Dendritic cell treated with granulocyte-macrophage colony-stimulating factor and Interleukin-4, amounts not matched to agents 40 ng/mL and 50 ng/mL, for 4 days (primary cell): ENCODE measurements at regions of chr7 and their contacts with region 1.

Region 1: DNA sequence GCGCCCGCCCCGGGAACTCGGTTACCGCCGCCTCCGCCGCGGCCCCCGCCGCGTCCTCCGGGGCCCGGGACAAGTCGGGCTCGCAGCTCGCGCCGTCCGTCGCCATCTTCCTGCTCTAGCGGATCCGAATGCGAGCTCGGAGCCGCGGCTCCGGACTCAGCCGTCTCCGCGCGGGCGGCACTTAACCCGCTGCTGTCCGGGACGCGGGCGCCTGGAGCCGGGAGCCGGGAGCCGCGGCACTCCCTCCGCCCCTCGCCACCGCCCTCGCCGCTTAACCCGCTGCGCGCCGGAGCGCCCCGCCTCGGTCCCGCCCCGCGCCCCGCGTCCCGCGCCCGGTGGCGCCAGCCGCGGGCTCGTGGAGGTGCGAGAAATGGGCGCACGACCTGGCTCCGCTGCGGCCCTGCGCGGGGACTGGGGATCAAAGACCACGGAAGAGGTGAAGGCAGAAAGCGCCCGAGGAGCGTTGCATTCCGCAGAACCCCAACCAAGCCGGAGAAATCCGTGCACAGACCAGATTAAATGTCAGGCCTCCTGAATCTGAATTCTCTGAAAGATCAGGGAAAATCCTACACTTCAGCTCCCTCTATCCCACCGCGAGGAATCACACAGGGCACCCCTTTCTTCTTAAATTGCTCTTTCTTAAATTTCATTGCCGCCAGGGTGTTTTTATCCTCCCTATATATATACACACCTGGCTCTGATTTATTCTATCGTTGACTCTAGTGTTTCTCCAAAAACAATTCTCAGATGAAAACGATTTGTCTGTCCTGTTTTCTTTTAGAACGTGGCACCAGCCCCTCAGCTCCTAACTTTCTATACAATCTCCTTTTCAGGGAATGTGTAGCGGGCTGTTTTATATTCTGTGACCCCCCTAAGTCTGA is at the start of gene CTTNBP2:
- H3K4me3 Mint-ChIP-seq: peak within 1 kb of the TSS; percentile 83
- H3K27ac Mint-ChIP-seq: peak within 1 kb of the TSS; percentile 77
- H3K4me1 Mint-ChIP-seq: peaks cover 43% of the 10 kb centered on the region
- H3K27me3 Mint-ChIP-seq: peaks cover 60% of the 10 kb centered on the region

Region 2: DNA sequence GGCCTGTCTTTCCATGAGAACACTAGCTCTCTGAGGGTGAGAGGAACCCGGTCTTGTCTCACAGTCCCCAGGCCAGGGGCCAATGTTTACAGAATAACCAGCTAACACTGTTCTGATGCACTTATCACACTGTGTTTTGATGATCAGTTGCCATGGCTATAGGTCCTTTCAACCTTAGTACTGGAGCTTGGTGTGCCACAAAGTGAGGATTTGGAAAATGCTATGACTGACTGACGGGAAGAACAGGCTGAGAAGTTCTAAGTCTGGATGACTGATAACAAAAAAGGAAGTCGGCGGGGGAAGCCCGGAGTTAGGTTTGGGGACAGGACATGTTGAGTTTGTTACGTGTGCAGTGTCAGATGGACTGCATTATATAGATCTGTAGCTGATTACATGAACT is 142.1 kb before region 1 on chr7:
- intact Hi-C with region 1: loop called (anchors 5 kb)
- H3K4me3 Mint-ChIP-seq: no peak overlapping the region
- H3K27ac Mint-ChIP-seq: peak overlapping the region; percentile 83
- H3K4me1 Mint-ChIP-seq: peaks cover 40% of the 10 kb centered on the region
- H3K27me3 Mint-ChIP-seq: peaks cover 1% of the 10 kb centered on the region

Region 3: DNA sequence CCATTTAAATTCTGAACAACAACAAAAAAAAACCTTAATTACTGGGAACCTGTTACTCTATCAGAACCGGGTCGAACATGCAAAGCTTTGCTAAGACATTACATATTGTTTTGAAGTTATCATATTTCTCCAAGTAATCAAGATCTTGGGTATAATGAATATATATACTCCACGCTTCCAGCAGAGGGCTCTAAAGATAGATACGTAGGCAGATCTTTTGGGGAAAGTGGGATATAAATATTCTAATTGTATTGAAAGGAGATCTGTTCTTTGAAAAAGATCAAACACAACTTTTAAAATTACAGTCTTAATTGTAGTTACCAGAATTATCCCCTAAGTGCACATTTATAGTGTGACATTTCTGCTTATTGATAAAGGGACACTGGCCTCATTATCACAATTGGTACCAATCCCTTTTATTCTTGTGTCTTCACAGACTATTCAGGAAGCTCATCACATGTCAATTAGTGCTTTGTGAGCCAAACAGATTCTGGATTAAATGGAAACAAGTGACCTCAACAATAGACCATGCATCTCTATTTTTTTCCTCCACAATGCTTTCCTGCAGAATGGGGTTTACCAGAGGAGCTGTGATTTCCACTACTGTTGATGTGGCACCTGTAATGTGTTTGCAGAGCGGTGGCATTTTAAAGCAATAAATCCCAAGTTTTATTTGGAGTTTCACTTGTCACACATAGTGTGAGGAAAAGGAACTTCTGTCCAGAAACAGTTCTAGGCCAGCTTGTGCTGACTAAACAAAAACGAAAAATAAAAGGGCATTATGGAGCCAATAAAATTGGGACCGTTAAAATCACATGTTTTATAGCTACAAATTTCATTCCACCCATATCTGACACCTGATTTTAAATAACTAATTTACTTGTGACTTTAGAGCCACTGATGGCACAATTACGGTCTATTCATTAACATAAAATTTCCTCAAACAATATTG is 122.7 kb before region 1 on chr7:
- intact Hi-C with region 1: loop called (anchors 5 kb)
- H3K4me3 Mint-ChIP-seq: no peak overlapping the region
- H3K27ac Mint-ChIP-seq: peak overlapping the region; percentile 77
- H3K4me1 Mint-ChIP-seq: peaks cover 47% of the 10 kb centered on the region
- H3K27me3 Mint-ChIP-seq: peaks cover 1% of the 10 kb centered on the region

Region 4: GRCh38 chr7:117791877-117792780 is 81.4 kb before region 1 on chr7:
- intact Hi-C with region 1: loop called (anchors 5 kb)
- H3K4me3 Mint-ChIP-seq: peak overlapping the region; percentile 67
- H3K27ac Mint-ChIP-seq: peak overlapping the region; percentile 93
- H3K4me1 Mint-ChIP-seq: peaks cover 64% of the 10 kb centered on the region
- H3K27me3 Mint-ChIP-seq: no peaks in the 10 kb centered on the region

Region 5: GRCh38 chr7:117837841-117838240 is 35.7 kb before region 1 on chr7:
- intact Hi-C with region 1: loop called (anchors 5 kb)
- H3K4me3 Mint-ChIP-seq: no peak overlapping the region
- H3K27ac Mint-ChIP-seq: no peak overlapping the region
- H3K4me1 Mint-ChIP-seq: peaks cover 22% of the 10 kb centered on the region
- H3K27me3 Mint-ChIP-seq: no peaks in the 10 kb centered on the region

Region 6: GRCh38 chr7:118183786-118184564 is 310.4 kb after region 1 on chr7 and contains the start of gene LSM8:
- intact Hi-C with region 1: loop called (anchors 5 kb)
- H3K4me3 Mint-ChIP-seq: peak within 1 kb of the TSS; percentile 97
- H3K27ac Mint-ChIP-seq: peak within 1 kb of the TSS; percentile 99
- H3K4me1 Mint-ChIP-seq: peaks cover 15% of the 10 kb centered on the region
- H3K27me3 Mint-ChIP-seq: no peaks in the 10 kb centered on the region